Cardiac septum (tissue), 1 donor: ENCODE measurements at regions of chr3 and their contacts with region 1.

Region 1: DNA sequence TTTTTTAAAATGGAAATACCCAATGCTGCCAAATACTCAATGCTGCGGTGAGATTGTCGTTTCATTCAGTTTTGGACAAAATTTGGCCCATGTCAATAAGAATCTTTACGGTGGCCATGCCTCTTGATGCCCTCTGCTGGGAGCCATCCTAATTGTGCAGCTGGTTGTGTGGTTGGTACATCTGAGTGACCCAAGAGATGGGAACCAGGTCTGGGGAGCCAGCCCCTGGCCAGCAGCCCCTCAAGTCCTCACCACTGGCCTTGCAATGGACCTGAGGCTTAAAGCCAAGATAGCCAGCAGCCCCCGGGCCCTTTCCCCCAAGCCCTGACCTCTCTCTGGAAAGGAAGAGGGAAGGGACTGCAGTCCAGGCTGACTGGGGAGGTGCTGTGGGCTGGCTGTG is 36.4 kb upstream of the ESYT3 start:
- DNase-seq: no peak

Region 2: DNA sequence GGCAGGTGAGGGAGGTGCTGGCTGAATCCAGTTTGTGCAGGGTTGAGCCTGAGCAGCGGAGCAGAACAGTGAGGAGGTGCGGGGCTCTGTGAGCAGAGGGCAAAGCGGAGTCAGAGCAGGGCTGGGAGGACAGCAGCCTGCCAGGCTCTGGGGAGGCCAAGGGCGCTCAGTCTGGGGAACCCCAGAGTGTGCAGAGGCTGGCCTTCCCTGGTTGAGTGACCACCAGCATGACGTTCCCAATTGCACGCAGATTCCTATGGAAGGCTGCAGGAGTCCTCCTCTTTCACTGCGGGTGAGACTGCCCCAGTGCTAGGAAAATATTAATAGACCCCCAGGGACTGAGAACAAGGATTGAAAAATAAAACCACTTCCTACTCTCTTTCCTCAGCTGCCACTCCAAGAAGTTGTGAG is 36.4 kb before region 1 on chr3:
- intact Hi-C with region 1: loop called (anchors 5 kb)
- DNase-seq: no peak